ENCODE measurements at regions of chr3 and their contacts with region 1.

Region 1: GRCh38 chr3:56997675-56998074 is 62.8 kb upstream of the SPATA12 start:
- DNase-seq: no peak
- ATAC-seq: peak in 2 of 4 donors; percentile 19 to 32
- H3K4me3 ChIP-seq: no peak overlapping the region
- H3K27ac ChIP-seq: no peak overlapping the region
- H3K4me1 ChIP-seq: no peaks in the 10 kb centered on the region
- H3K27me3 ChIP-seq: no peaks in the 10 kb centered on the region
- CTCF ChIP-seq: no peak

Region 2: DNA sequence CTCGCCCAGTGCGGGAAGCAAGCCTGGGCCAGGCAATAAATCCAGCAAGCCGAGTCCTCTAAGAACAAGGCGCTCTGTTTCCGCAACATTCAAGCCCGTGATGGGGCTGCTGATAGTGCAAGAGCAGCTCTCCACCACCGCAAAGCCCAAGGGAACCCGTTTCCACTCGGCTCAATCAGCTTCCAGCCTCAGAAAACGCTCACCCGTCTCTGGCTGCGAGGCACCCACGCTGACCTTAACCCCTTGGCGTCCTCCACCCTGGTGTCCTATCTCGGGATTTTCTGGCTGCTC is 80.6 kb after region 1 on chr3:
- intact Hi-C with region 1: loop called (anchors 2 to 10 kb)
- DNase-seq: peak; percentile 66 to 84
- ATAC-seq: peak; percentile 50 to 65 (median 55)
- H3K4me3 ChIP-seq: peak overlapping the region; percentile 87
- H3K27ac ChIP-seq: peak overlapping the region; percentile 30
- H3K4me1 ChIP-seq: no peaks in the 10 kb centered on the region
- H3K27me3 ChIP-seq: peaks cover 0 to 17% (median 2%) of the 10 kb centered on the region in 3 donors
- CTCF ChIP-seq: no peak

Region 3: GRCh38 chr3:57112206-57112605 is 114.5 kb after region 1 on chr3:
- intact Hi-C with region 1: no loop called
- DNase-seq: no peak
- ATAC-seq: no peak
- H3K4me3 ChIP-seq: no peak overlapping the region
- H3K27ac ChIP-seq: no peak overlapping the region
- H3K4me1 ChIP-seq: no peaks in the 10 kb centered on the region
- H3K27me3 ChIP-seq: peaks cover 0 to 9% (median 0%) of the 10 kb centered on the region in 3 donors
- CTCF ChIP-seq: no peak

Measured in psoas muscle (tissue), 8 donors.